ENCODE measurements at regions of chr6 and their contacts with region 1.

Region 1: GRCh38 chr6:23611778-23612381 is 514.1 kb upstream of the NRSN1 start:
- DNase-seq: no peak
- ATAC-seq: no peak
- H3K4me3 ChIP-seq: no peak overlapping the region
- H3K27ac ChIP-seq: no peak overlapping the region
- H3K4me1 ChIP-seq: no peaks in the 10 kb centered on the region
- H3K27me3 ChIP-seq: no peaks in the 10 kb centered on the region
- CTCF ChIP-seq: no peak
- POLR2A ChIP-seq: no peak

Region 2: GRCh38 chr6:23630726-23631635 is 19.1 kb after region 1 on chr6:
- in situ Hi-C with region 1: no loop called
- intact Hi-C with region 1: loop called (anchors 1 kb)
- DNase-seq: no peak
- ATAC-seq: no peak
- H3K4me3 ChIP-seq: no peak overlapping the region
- H3K27ac ChIP-seq: no peak overlapping the region
- H3K4me1 ChIP-seq: no peaks in the 10 kb centered on the region
- H3K27me3 ChIP-seq: no peaks in the 10 kb centered on the region
- CTCF ChIP-seq: no peak
- POLR2A ChIP-seq: no peak

Region 3: GRCh38 chr6:23647045-23647444 is 35.2 kb after region 1 on chr6:
- in situ Hi-C with region 1: no loop called
- intact Hi-C with region 1: no loop called
- DNase-seq: no peak
- ATAC-seq: no peak
- H3K4me3 ChIP-seq: no peak overlapping the region
- H3K27ac ChIP-seq: no peak overlapping the region
- H3K4me1 ChIP-seq: no peaks in the 10 kb centered on the region
- H3K27me3 ChIP-seq: no peaks in the 10 kb centered on the region
- CTCF ChIP-seq: no peak
- POLR2A ChIP-seq: no peak